Activated T-helper 2 cell treated with anti-CD3 and anti-CD28 coated beads, Interferon-gamma antibody, Interleukin-2, Interleukin-4, amounts not matched to agents 10 μg/mL and 5 μg/mL and 100 μg/mL, durations not matched to agents 14 hours and 24 hours and 36 hours (primary cell): ENCODE measurements at regions of chr16 and their contacts with region 1.

Region 1: DNA sequence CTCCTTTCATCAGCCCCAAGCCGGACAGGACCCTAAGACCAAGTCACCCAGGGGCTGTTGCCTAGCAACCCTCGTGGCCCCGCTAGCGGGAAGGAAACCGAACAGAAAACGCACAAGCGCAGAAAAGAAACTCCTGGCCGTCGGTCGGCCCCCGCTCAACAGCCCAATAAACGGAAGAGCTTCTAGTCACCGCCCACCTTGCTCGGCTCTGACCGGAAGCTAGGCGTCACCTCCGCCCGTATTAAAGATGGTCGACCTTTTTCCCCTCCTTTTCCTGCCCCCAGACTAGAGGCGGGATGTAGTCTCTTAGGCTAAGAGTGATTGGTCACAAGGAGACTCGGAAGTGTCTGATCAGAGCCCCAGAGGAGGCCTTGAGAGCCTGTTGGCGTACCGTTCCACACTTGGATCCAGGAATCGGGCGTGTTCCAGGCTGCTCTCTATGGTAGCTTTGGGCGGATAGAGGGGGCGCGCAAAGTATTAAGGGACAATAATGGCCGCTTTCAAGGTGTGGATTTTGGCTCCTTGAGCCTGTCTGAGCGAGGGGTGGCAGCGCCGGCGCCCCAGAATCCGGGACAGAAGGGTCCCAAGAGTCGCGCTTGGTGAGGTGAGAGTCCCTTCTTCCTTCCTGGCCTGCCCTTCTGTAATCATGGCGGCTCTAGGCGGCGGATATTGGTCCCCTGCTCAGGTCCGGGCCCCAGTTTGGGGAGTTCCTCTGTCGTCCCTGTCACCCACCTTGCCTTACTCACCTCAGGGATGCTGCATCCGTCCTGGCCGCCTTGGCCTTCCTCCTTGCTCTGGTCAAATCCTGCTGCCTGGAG is at the starts of genes DHX38 and TXNL4B:
- DNase-seq: peak; percentile 92
- H3K4me3 Mint-ChIP-seq: peak within 1 kb of the TSS; percentile 98
- H3K27ac Mint-ChIP-seq: peak within 1 kb of the TSS; percentile 99
- H3K4me1 Mint-ChIP-seq: peaks cover 36% of the 10 kb centered on the region
- H3K27me3 Mint-ChIP-seq: no peaks in the 10 kb centered on the region
- total RNA-seq, gene DHX38: 86.3 and 95.8 TPM in 2 replicates
- total RNA-seq, gene TXNL4B: 16.5 and 17.1 TPM in 2 replicates

Region 2: GRCh38 chr16:71288890-71289733 is 804.5 kb before region 1 on chr16 and contains the start of gene CMTR2:
- intact Hi-C with region 1: loop called (anchors 5 kb)
- DNase-seq: peak; percentile 88
- H3K4me3 Mint-ChIP-seq: peak within 1 kb of the TSS; percentile 88
- H3K27ac Mint-ChIP-seq: peak within 1 kb of the TSS; percentile 84
- H3K4me1 Mint-ChIP-seq: peaks cover 19% of the 10 kb centered on the region
- H3K27me3 Mint-ChIP-seq: peaks cover 13% of the 10 kb centered on the region
- total RNA-seq, gene CMTR2: 17.1 and 19.6 TPM in 2 replicates

Region 3: DNA sequence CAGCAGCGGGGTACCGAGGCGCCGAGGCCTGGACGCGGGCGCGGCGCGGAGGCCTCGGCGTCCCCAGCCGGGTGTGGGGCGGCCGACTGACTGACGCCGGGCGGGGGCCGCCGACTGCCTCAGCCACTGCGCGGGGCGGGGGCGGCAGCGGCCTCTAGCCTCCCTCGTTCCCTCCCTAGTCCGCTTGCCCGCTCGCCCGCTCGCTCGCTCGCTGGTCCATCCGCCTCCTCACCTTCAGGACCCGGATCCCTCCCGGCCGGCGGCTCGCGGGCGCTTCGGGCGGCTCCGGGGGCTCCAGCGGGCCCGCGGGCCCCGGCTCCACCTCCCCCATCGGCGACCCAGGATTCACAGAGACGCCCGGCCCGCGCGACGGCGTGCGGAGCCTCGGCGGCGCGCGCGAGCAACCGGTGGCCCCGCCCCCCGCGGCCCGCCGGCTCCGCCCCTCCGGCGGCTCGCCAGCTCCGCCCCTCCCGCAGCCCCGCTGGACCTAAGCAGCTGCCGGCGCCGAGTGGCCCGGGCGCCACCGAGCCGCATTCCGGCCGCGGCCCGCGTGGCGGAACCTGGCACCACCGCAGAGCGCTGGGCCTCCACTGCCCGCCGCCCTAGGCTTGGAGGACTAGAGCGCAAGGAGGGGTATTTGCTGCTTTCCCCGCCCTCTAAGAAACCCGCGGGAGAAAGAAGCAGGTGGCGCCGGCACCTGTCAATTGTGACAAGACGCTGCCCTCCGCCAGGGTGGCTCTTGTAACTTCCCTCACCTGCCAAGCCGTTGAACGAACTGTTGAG is 369.9 kb before region 1 on chr16:
- intact Hi-C with region 1: loop called (anchors 10 kb)
- DNase-seq: peak; percentile 71
- H3K4me3 Mint-ChIP-seq: peak overlapping the region; percentile 81
- H3K27ac Mint-ChIP-seq: no peak overlapping the region
- H3K4me1 Mint-ChIP-seq: peaks cover 12% of the 10 kb centered on the region
- H3K27me3 Mint-ChIP-seq: peaks cover 9% of the 10 kb centered on the region

Region 4: GRCh38 chr16:71894921-71895678 is 198.6 kb before region 1 on chr16 and contains the start of gene IST1:
- intact Hi-C with region 1: loop called (anchors 10 kb)
- DNase-seq: peak; percentile 97
- H3K4me3 Mint-ChIP-seq: peak within 1 kb of the TSS; percentile 95
- H3K27ac Mint-ChIP-seq: peak within 1 kb of the TSS; percentile 98
- H3K4me1 Mint-ChIP-seq: peaks cover 13% of the 10 kb centered on the region
- H3K27me3 Mint-ChIP-seq: no peaks in the 10 kb centered on the region
- total RNA-seq, gene IST1: 158 and 167 TPM in 2 replicates

Region 5: DNA sequence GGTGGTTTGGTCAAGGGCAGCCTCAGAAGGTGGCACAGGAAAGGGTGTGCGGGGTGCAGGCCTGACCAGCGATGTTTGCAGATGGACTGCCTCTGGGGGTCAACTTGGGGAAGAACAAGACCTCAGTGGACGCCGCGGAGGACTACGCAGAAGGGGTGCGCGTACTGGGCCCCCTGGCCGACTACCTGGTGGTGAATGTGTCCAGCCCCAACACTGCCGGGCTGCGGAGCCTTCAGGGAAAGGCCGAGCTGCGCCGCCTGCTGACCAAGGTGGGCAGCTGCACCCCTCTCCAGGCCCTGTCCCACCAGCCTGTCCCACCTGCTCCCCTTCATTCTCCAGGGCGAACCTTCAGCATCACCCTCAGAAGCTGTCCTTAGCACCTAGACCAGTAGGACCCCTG is 72.6 kb before region 1 on chr16:
- intact Hi-C with region 1: no loop called
- DNase-seq: no peak
- H3K4me3 Mint-ChIP-seq: no peak overlapping the region
- H3K27ac Mint-ChIP-seq: no peak overlapping the region
- H3K4me1 Mint-ChIP-seq: no peaks in the 10 kb centered on the region
- H3K27me3 Mint-ChIP-seq: no peaks in the 10 kb centered on the region

Region 6: DNA sequence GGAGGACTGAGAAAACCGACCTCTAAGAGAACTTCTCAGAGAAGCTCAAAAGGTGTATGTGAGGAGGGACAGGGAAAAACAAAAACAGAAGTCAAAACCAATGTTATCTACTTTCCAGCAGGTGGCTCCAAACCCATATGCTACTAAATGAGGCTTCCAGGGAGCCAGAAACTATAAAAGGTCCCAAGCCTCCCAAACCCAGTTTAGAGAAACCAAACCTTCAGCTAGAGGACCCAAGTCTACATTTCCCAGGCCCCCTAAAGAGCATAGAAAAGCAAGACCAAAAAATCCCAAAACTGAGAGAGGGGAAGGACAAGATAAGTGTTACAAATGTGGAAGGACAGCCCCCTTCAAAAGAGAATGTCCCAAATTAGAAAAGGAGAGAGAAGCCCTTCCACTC is 26.9 kb before region 1 on chr16:
- intact Hi-C with region 1: loop called (anchors 2 kb)
- DNase-seq: no peak
- H3K4me3 Mint-ChIP-seq: no peak overlapping the region
- H3K27ac Mint-ChIP-seq: no peak overlapping the region
- H3K4me1 Mint-ChIP-seq: no peaks in the 10 kb centered on the region
- H3K27me3 Mint-ChIP-seq: no peaks in the 10 kb centered on the region

Region 7: GRCh38 chr16:72149676-72150464 is 56.2 kb after region 1 on chr16:
- intact Hi-C with region 1: no loop called
- DNase-seq: no peak
- H3K4me3 Mint-ChIP-seq: no peak overlapping the region
- H3K27ac Mint-ChIP-seq: no peak overlapping the region
- H3K4me1 Mint-ChIP-seq: no peaks in the 10 kb centered on the region
- H3K27me3 Mint-ChIP-seq: no peaks in the 10 kb centered on the region